ENCODE measurements at regions of chr4 and their contacts with region 1.

Region 1: GRCh38 chr4:98150092-98150761 is 7.0 kb upstream of the STPG2 start:
- DNase-seq: no peak
- ATAC-seq: no peak
- H3K4me3 Mint-ChIP-seq: no peak overlapping the region
- H3K27ac Mint-ChIP-seq: no peak overlapping the region
- H3K4me1 Mint-ChIP-seq: peaks cover 25% of the 10 kb centered on the region
- H3K27me3 Mint-ChIP-seq: no peaks in the 10 kb centered on the region
- CTCF ChIP-seq: no peak

Region 2: DNA sequence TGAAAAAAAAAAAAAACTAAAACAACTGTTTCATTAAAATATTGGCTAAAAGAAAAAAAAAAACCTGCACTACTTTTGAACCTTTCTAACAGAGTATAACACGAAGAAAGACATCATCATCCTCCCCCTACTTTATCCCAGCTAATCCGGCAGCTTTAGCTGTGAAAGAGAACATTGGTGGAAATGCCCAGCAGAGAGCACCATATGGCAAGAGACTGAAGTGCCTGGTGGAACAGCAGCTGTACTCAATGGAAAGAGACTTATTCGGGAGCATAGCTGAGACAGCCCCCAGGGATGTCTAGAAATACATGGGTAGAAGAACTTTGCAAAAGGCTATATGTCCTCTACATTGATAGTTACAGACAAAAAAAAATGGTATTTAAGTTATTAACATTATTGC is 37.2 kb before region 1 on chr4:
- CTCF ChIA-PET with region 1: no interaction called
- POLR2A ChIA-PET with region 1: no interaction called
- intact Hi-C with region 1: no loop called
- DNase-seq: no peak
- ATAC-seq: no peak
- H3K4me3 Mint-ChIP-seq: no peak overlapping the region
- H3K27ac Mint-ChIP-seq: no peak overlapping the region
- H3K4me1 Mint-ChIP-seq: no peaks in the 10 kb centered on the region
- H3K27me3 Mint-ChIP-seq: no peaks in the 10 kb centered on the region
- CTCF ChIP-seq: no peak

Region 3: DNA sequence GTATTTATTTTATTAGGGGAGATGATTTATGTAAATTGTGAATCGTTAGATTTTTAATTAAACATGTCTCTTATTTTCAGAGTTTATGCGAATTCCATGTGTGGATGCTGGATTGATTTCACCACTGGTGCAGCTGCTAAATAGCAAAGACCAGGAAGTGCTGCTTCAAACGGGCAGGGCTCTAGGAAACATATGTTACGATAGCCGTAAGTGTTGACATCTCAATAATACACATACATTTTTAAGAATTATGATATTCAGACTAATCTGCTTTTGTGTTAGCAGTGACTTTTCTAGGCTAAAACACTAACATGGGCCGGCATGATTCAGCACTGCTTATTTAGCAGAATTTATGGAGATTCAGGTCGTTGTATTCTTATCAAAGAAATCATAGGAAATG is 202.2 kb after region 1 on chr4:
- CTCF ChIA-PET with region 1: no interaction called
- POLR2A ChIA-PET with region 1: no interaction called
- intact Hi-C with region 1: loop called (anchors 10 kb)
- DNase-seq: no peak
- ATAC-seq: no peak
- H3K4me3 Mint-ChIP-seq: peak overlapping the region; percentile 55
- H3K27ac Mint-ChIP-seq: peak overlapping the region; percentile 19
- H3K4me1 Mint-ChIP-seq: peaks cover 21% of the 10 kb centered on the region
- H3K27me3 Mint-ChIP-seq: no peaks in the 10 kb centered on the region
- CTCF ChIP-seq: no peak

Region 4: GRCh38 chr4:98828801-98829200 is 678.6 kb after region 1 on chr4:
- CTCF ChIA-PET with region 1: interaction called, 3 read pairs
- POLR2A ChIA-PET with region 1: no interaction called
- intact Hi-C with region 1: loop called (anchors 2 kb)
- DNase-seq: no peak
- ATAC-seq: no peak
- H3K4me3 Mint-ChIP-seq: no peak overlapping the region
- H3K27ac Mint-ChIP-seq: no peak overlapping the region
- H3K4me1 Mint-ChIP-seq: no peaks in the 10 kb centered on the region
- H3K27me3 Mint-ChIP-seq: peaks cover 5% of the 10 kb centered on the region
- CTCF ChIP-seq: no peak

Region 5: GRCh38 chr4:99405433-99406115 is 1255.3 kb after region 1 on chr4:
- CTCF ChIA-PET with region 1: interaction called, 5 read pairs
- POLR2A ChIA-PET with region 1: interaction called, 5 read pairs
- intact Hi-C with region 1: loop called (anchors 1 kb)
- DNase-seq: no peak
- ATAC-seq: peak; percentile 69
- H3K4me3 Mint-ChIP-seq: no peak overlapping the region
- H3K27ac Mint-ChIP-seq: no peak overlapping the region
- H3K4me1 Mint-ChIP-seq: peaks cover 7% of the 10 kb centered on the region
- H3K27me3 Mint-ChIP-seq: peaks cover 1% of the 10 kb centered on the region
- CTCF ChIP-seq: no peak